OCI-LY7 (cell line): ENCODE measurements at regions of chr2 and their contacts with region 1.

Region 1: DNA sequence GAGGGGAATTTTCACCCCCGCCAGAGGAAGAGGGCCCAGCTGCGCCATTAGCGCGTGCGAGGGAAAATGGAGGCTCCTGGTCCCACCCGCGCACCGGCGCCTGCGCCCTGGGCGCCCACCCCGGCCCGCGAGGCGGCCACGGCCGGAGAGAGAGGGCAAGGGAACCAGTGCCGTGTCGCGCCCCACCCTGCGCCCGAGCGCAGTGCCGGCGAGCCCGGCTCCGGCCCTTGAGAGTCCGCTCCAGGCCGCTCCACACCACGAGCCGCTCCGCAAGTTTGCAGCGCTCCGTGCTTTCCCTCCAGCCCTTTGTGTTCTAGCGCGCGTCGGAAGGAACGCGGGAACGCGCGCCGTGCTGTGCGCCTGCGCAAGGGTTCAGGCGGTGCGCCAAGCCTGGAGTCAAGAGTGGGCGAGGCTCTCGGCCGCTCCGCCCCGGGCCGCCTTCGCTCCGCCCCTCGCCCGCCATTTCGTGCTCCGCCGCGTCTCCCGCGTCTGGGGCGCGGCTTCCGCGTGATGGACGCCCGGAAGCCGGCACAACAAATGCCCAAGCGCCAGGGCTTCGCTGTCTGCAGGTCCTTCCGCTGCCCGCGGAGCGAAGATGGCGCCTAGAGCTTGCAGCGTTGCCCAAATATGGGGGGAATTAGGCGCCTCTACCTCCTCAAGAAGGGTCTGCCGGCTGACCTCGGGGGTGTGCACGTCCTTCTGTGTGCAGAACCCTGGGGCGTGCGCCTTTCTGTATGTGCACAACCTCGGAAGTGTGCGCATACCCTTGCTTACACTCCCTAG is 46.1 kb upstream of the PTMA start:
- DNase-seq: peak; percentile 99
- H3K4me3 ChIP-seq: peak overlapping the region; percentile 63
- H3K27ac ChIP-seq: peak overlapping the region; percentile 73
- H3K4me1 ChIP-seq: peaks cover 63% of the 10 kb centered on the region
- CTCF ChIP-seq: no peak

Region 2: DNA sequence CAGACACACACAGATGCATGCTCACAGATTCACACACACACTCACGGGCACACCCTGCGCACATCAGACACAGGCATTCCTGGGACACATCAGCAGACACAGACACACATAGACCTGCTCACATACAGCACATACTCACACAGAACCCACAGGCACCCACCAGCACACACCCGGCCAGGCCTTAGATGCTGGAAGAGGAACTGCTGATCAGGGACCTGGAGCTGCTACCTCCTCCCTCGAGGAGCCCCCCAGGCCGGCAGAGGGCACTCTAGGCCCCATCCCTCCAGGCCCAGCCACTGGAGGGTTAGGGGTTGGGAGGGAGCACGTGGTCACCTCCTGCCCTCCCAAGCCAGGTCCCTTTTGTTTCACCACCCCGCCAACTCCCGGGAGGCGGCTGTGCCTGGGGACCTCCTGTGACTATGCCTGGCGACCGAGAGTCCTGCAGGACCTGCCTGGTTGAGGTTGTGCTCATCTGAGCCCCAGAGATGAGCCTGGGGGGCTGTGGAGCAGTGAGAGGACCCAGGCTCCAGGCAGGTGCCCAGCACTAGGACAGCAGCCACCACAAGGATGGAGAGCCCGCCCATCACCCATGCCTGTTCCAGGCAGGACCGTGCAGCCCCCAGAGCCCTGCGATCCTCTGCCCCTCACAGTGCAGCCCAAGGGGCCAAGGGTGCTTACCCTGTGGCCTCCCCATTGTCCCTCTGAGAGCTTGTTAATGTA is 25.1 kb after region 1 on chr2:
- CTCF ChIA-PET with region 1: interaction called, 4 read pairs
- POLR2A ChIA-PET with region 1: interaction called, 10 read pairs
- intact Hi-C with region 1: no loop called
- DNase-seq: peak; percentile 92
- H3K4me3 ChIP-seq: peak overlapping the region; percentile 68
- H3K27ac ChIP-seq: peak overlapping the region; percentile 71
- H3K4me1 ChIP-seq: peaks cover 79% of the 10 kb centered on the region
- CTCF ChIP-seq: peak; percentile 86

Region 3: GRCh38 chr2:231765496-231765929 is 103.3 kb after region 1 on chr2:
- CTCF ChIA-PET with region 1: no interaction called
- POLR2A ChIA-PET with region 1: no interaction called
- intact Hi-C with region 1: no loop called
- DNase-seq: no peak
- H3K4me3 ChIP-seq: no peak overlapping the region
- H3K27ac ChIP-seq: no peak overlapping the region
- H3K4me1 ChIP-seq: no peaks in the 10 kb centered on the region
- CTCF ChIP-seq: no peak